ENCODE measurements at regions of chr17 and their contacts with region 1.

Region 1: DNA sequence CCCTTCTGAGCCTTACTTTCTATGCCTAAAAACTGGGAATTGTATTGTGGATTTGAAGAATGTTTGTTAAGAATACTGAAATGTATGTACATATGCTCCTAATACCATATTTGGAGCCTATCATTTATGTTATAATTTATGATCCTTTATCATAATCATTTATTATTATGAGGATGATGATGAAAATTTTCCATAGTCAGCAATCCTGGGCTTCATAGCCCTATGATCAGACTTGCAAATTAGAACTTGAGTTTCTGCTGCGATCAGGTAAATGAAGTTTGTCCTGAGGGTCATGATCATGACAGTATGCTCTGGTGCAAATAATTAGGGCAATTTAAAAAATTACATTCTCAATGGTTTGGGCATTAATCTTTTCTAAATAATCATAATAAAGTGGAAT is 147.4 kb downstream of the CA10 start:
- DNase-seq: no peak
- H3K4me3 Mint-ChIP-seq: no peak overlapping the region
- H3K27ac Mint-ChIP-seq: no peak overlapping the region
- H3K4me1 Mint-ChIP-seq: no peaks in the 10 kb centered on the region
- H3K27me3 Mint-ChIP-seq: no peaks in the 10 kb centered on the region
- CTCF ChIP-seq: no peak

Region 2: DNA sequence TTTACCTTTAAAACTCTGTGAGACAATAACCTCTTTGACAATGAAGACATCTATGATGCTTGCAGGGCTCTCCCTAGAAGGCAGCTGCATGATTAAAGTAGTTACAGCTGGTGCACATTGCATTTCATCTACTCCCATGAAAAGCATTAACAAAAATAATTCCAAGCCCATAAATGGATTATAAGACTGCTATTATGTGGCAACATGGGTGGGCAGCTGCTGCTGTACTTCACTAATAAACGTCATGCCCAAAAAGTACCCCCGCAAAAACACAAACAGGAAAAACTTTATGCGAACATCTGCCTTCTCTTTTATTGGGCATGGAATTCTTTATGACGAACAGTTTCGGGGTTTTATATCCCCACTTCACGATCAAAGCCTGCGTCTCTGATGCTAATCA is 77.4 kb before region 1 on chr17:
- CTCF ChIA-PET with region 1: no interaction called
- intact Hi-C with region 1: no loop called
- DNase-seq: no peak
- H3K4me3 Mint-ChIP-seq: no peak overlapping the region
- H3K27ac Mint-ChIP-seq: no peak overlapping the region
- H3K4me1 Mint-ChIP-seq: no peaks in the 10 kb centered on the region
- H3K27me3 Mint-ChIP-seq: peaks cover 95% of the 10 kb centered on the region
- CTCF ChIP-seq: no peak

Region 3: DNA sequence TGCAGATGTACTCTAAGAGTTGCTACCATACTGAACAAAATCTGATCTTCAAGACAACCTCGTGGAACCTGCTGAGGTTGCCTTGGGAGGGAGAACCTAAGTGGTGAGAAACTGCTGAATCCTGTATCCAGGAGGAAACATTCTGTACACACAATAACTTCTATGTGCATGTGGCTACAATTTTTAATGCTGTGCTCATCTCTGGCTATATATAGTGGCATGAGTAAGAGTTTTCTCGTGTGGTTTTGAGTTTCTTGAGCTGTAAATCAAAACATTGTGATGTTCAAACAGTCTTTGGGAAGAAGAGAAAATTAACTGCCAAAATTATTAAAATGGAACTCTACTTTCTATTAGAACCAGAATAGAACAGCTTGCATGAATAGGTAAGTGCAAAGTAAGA is 59.3 kb before region 1 on chr17:
- CTCF ChIA-PET with region 1: interaction called, 3 read pairs
- intact Hi-C with region 1: loop called (anchors 5 kb)
- DNase-seq: no peak
- H3K4me3 Mint-ChIP-seq: no peak overlapping the region
- H3K27ac Mint-ChIP-seq: no peak overlapping the region
- H3K4me1 Mint-ChIP-seq: no peaks in the 10 kb centered on the region
- H3K27me3 Mint-ChIP-seq: peaks cover 81% of the 10 kb centered on the region
- CTCF ChIP-seq: no peak

Region 4: DNA sequence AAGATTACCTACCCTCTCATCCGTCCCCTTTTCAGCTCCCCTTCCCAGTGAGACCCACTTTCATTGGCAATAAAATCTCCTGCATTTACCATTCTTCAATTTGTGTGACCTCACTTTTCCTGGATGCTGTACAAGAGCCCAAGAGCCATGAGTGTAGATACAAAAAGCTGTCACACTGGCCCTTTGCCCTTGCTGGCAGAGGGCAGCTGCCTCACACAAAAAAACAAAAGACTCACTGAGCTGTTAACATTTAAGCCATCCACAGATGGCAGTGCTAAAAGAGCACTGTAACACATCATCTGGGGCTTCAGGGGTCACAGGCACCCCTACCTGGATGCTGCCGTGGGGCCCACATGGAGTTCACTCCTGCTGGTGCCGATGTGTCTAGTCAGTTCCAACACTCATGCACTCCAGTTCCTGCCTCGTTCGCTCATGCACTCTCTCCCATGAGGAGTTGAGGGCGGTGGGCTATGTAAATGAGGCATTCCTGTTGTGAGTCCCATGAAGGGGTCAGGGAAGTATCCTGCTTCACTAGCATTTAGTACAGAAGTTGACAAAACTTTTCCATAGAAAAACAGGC is 24.4 kb after region 1 on chr17:
- CTCF ChIA-PET with region 1: no interaction called
- intact Hi-C with region 1: no loop called
- DNase-seq: no peak
- H3K4me3 Mint-ChIP-seq: no peak overlapping the region
- H3K27ac Mint-ChIP-seq: no peak overlapping the region
- H3K4me1 Mint-ChIP-seq: no peaks in the 10 kb centered on the region
- H3K27me3 Mint-ChIP-seq: peaks cover 29% of the 10 kb centered on the region
- CTCF ChIP-seq: no peak

Measured in Calu3 (cell line).